ENCODE measurements at regions of chr15 and their contacts with region 1.

Region 1: GRCh38 chr15:44584162-44584749 is 47.3 kb downstream of the EIF3J start:
- DNase-seq: peak; percentile 79
- H3K4me3 ChIP-seq: no peak overlapping the region
- H3K27ac ChIP-seq: no peak overlapping the region
- H3K4me1 ChIP-seq: no peaks in the 10 kb centered on the region
- H3K27me3 ChIP-seq: no peaks in the 10 kb centered on the region
- CTCF ChIP-seq: peak; percentile 81

Region 2: GRCh38 chr15:43913026-43913927 is 671.0 kb before region 1 on chr15:
- CTCF ChIA-PET with region 1: interaction called, 12 read pairs
- POLR2A ChIA-PET with region 1: no interaction called
- intact Hi-C with region 1: no loop called
- DNase-seq: peak; percentile 87
- H3K4me3 ChIP-seq: no peak overlapping the region
- H3K27ac ChIP-seq: no peak overlapping the region
- H3K4me1 ChIP-seq: peaks cover 4% of the 10 kb centered on the region
- H3K27me3 ChIP-seq: no peaks in the 10 kb centered on the region
- CTCF ChIP-seq: no peak

Region 3: GRCh38 chr15:44861439-44861910 is 277.2 kb after region 1 on chr15:
- CTCF ChIA-PET with region 1: no interaction called
- POLR2A ChIA-PET with region 1: no interaction called
- intact Hi-C with region 1: no loop called
- DNase-seq: no peak
- H3K4me3 ChIP-seq: no peak overlapping the region
- H3K27ac ChIP-seq: no peak overlapping the region
- H3K4me1 ChIP-seq: no peaks in the 10 kb centered on the region
- H3K27me3 ChIP-seq: no peaks in the 10 kb centered on the region
- CTCF ChIP-seq: no peak

Region 4: GRCh38 chr15:45118131-45118588 is 533.9 kb after region 1 on chr15:
- CTCF ChIA-PET with region 1: interaction called, 8 read pairs
- POLR2A ChIA-PET with region 1: no interaction called
- intact Hi-C with region 1: loop called (anchors 10 kb)
- DNase-seq: peak; percentile 96
- H3K4me3 ChIP-seq: no peak overlapping the region
- H3K27ac ChIP-seq: no peak overlapping the region
- H3K4me1 ChIP-seq: peaks cover 10% of the 10 kb centered on the region
- H3K27me3 ChIP-seq: peaks cover 19% of the 10 kb centered on the region
- CTCF ChIP-seq: peak; percentile 100

Measured in A673 (cell line).